ENCODE measurements at regions of chr16 and their contacts with region 1.

Region 1: DNA sequence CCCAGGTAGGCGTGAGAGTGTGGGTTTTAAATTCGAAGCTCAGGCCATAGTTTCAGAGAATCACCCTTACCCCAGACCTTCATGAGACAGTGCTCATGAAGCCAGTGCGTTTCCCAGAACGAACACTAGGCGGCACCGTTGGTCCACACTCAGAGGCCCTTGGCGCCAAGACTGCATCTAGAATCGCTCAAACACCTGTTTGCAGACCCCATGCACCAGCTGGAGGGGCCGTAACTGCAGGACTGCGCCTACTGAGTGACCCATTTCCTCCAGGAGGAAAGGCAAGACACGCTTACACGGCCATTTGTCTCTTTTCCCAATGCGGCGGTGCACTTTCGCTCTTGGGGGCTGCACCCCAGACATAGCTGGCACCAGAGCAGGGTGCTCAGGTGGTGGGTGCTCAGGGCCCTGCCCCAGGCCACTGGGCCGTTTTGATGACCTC is 34.0 kb downstream of the ADGRG5 start:
- DNase-seq: peak; percentile 52 to 89 (median 73)
- ATAC-seq: peak; percentile 95
- H3K4me3 ChIP-seq: no peak overlapping the region
- H3K27ac ChIP-seq: no peak overlapping the region
- H3K4me1 ChIP-seq: no peaks in the 10 kb centered on the region
- H3K27me3 ChIP-seq: peaks cover 0 to 17% of the 10 kb centered on the region in 2 donors
- CTCF ChIP-seq: peak; percentile 94 to 98

Region 2: GRCh38 chr16:57475711-57476339 is 100.6 kb before region 1 on chr16:
- intact Hi-C with region 1: no loop called
- DNase-seq: peak in 2 of 4 donors; percentile 50 to 84
- ATAC-seq: peak; percentile 24
- H3K4me3 ChIP-seq: no peak overlapping the region
- H3K27ac ChIP-seq: no peak overlapping the region
- H3K4me1 ChIP-seq: peaks cover 49 to 69% of the 10 kb centered on the region in 2 donors
- H3K27me3 ChIP-seq: peaks cover 0 to 8% of the 10 kb centered on the region in 2 donors
- CTCF ChIP-seq: peak; percentile 32 to 55

Region 3: DNA sequence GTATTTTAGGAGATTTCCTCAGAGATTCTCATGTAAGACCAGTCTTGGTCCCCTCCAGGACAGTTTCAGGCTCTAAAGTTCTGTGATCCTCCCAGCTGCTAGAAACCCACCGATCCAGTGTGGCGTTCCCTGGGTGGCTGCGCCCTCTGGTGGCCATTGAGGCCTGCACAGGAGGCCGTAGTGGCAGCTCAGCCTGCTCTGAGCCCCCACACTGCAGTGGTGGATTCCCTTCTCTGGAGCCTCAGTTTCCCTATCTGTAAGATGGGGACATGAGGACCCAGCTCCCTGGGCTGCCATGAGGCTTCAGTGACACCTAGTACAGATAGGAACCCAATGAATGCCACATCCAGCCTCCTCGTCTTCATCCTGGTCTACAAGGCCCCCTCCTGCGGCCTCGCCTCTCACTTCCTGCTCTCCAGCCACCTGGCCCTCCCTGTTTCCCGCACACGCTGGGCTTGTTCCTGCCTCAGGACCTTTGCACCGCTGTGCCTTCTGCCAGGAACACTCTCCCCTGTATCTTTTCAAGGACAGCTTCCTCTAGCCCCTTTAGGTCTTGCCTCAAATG is 56.6 kb before region 1 on chr16:
- intact Hi-C with region 1: no loop called
- DNase-seq: peak; percentile 49 to 95 (median 74)
- ATAC-seq: peak; percentile 91
- H3K4me3 ChIP-seq: no peak overlapping the region
- H3K27ac ChIP-seq: no peak overlapping the region
- H3K4me1 ChIP-seq: peaks cover 0 to 10% of the 10 kb centered on the region in 2 donors
- H3K27me3 ChIP-seq: no peaks in the 10 kb centered on the region
- CTCF ChIP-seq: peak; percentile 92 to 98

Region 4: DNA sequence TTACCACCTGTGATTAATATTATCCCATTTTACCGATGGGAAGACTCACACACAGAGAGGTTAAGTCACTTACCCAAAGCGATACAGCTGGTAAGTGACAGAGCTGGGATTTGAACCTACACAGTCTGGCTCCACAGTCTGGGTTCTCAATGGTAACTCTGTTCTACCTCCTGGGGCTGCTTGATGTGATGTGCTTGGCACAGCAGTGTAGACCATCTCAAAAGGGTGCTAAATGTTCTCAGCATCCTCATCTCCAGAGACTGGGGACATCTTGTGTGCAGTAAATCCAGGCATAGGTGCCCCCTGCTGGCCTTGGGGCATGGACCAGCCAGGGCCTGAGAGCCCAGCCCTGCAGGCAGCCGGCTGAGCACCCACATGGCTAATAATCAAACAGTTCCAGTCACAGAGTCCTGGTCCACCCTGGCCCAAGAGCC is 143.7 kb after region 1 on chr16:
- intact Hi-C with region 1: loop called in 1 of 2 experiments (anchors 10 kb)
- DNase-seq: peak in 2 of 4 donors; percentile 42 to 89
- ATAC-seq: peak; percentile 89
- H3K4me3 ChIP-seq: no peak overlapping the region
- H3K27ac ChIP-seq: no peak overlapping the region
- H3K4me1 ChIP-seq: no peaks in the 10 kb centered on the region
- H3K27me3 ChIP-seq: no peaks in the 10 kb centered on the region
- CTCF ChIP-seq: peak in 1 of 2 donors; percentile 68